Natural killer cell (primary cell): ENCODE measurements at regions of chr2 and their contacts with region 1.

Region 1: DNA sequence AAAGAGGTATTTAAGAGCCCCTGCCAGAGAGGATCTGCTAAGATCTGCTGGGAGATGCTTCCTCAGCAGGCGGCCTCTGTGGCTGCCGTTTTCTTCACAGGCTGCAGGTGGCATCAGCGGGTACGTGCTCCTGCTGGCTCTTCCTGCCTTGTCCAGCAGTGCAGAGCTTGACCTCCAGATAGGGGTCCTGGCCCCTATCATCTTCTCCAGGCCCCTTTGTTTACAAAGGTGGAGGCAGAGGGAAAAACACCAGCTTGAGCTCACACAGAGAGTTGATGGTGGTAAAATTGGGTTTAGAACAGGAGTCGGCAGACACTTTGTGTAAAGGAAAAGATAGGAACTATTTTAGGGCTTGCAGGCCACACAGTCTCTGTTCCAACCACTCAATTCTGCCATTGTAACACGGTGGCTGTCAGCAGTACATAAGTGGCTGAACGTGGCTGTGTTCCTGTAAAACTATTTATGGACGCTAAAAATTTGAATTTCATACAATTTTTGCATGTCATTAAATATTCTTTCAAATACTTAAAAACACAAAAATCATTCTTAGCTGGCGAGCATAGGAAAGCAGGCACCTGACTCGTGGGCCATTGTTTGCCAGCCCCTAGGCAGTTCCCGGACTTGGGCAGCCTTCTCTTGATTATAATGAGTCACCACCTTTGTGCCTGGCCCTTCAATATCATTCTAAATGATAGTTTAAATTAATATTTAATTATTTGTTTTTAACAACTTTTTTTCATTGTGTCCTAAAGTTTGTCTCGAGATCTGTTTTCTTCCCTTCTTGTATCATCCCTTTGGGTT is 98.2 kb upstream of the B3GNT7 start:
- DNase-seq: peak; percentile 42
- ATAC-seq: peak in 2 of 3 donors; percentile 77 to 78
- H3K4me3 ChIP-seq: no peak overlapping the region
- H3K4me3 Mint-ChIP-seq: no peak overlapping the region
- H3K27ac ChIP-seq: no peak overlapping the region
- H3K27ac Mint-ChIP-seq: peak overlapping the region; percentile 4 to 49
- H3K4me1 ChIP-seq: peaks cover 22% of the 10 kb centered on the region
- H3K4me1 Mint-ChIP-seq: peaks cover 38 to 40% of the 10 kb centered on the region in 2 donors
- H3K27me3 ChIP-seq: no peaks in the 10 kb centered on the region
- H3K27me3 Mint-ChIP-seq: no peaks in the 10 kb centered on the region
- CTCF ChIP-seq: peak; percentile 77

Region 2: GRCh38 chr2:231399853-231400680 is 102.8 kb after region 1 on chr2:
- intact Hi-C with region 1: loop called (anchors 1 kb)
- DNase-seq: no peak
- ATAC-seq: peak in 1 of 3 donors; percentile 17
- H3K4me3 ChIP-seq: no peak overlapping the region
- H3K4me3 Mint-ChIP-seq: peak overlapping the region; percentile 9
- H3K27ac ChIP-seq: peak overlapping the region; percentile 30
- H3K27ac Mint-ChIP-seq: peak overlapping the region; percentile 14 to 53
- H3K4me1 ChIP-seq: peaks cover 40% of the 10 kb centered on the region
- H3K4me1 Mint-ChIP-seq: peaks cover 26 to 47% of the 10 kb centered on the region in 2 donors
- H3K27me3 ChIP-seq: no peaks in the 10 kb centered on the region
- H3K27me3 Mint-ChIP-seq: no peaks in the 10 kb centered on the region
- CTCF ChIP-seq: no peak